HCT116 (cell line): ENCODE measurements at regions of chr15 and their contacts with region 1.

Region 1: GRCh38 chr15:79380755-79381497 is 51.2 kb upstream of the MINAR1 start:
- DNase-seq: peak; percentile 40
- ATAC-seq: peak; percentile 99
- H3K4me3 ChIP-seq: no peak overlapping the region
- H3K27ac ChIP-seq: no peak overlapping the region
- H3K4me1 ChIP-seq: no peaks in the 10 kb centered on the region
- H3K27me3 ChIP-seq: no peaks in the 10 kb centered on the region
- CTCF ChIP-seq: peak; percentile 89 to 92 (median 92)
- POLR2A ChIP-seq: no peak
- RAD21 ChIP-seq: peak; percentile 81

Region 2: DNA sequence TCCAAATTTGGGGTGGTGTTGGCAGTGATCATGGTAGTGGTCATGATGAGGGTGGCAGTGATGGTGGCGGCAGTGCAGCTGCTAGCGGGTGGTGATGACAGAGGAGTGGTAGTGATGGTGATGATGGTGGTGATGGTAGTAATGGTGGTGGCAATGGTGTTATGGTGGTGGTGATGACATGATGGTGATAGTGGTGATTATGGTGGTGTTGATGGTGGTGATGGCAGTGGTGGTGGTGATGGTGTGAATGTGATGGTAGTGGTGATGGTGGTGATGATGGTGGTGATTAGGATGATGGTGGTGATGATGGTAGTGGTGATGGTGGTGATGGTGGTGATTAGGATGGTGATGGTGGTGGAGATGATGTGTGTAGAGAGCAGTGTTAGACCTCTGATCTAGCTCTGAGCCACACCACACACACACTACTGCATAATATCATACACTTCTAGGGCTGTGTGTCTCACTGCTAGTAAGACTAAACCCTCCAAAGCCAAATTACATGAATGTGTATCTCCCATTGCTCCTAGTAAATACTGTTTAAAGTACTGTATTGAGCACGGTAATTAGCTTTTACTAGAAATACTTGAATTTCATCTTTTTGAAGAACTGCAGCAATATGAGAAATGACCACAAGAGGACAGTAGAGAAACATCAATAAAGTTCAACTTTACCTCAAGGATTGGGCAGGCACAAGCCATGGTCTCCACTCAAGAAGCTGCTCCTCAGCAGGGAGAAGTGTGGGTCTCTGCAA is 41.2 kb before region 1 on chr15:
- CTCF ChIA-PET with region 1: interaction called, 17 read pairs
- POLR2A ChIA-PET with region 1: no interaction called
- RAD21 ChIA-PET with region 1: no interaction called
- intact Hi-C with region 1: no loop called
- DNase-seq: peak; percentile 29
- ATAC-seq: peak; percentile 70
- H3K4me3 ChIP-seq: no peak overlapping the region
- H3K27ac ChIP-seq: no peak overlapping the region
- H3K4me1 ChIP-seq: no peaks in the 10 kb centered on the region
- H3K27me3 ChIP-seq: no peaks in the 10 kb centered on the region
- CTCF ChIP-seq: peak; percentile 67 to 96 (median 76); a peak in 5 of 6 replicates
- POLR2A ChIP-seq: no peak
- RAD21 ChIP-seq: peak; percentile 72

Region 3: GRCh38 chr15:79572691-79573404 is 191.9 kb after region 1 on chr15:
- CTCF ChIA-PET with region 1: interaction called, 9 read pairs
- POLR2A ChIA-PET with region 1: no interaction called
- RAD21 ChIA-PET with region 1: no interaction called
- intact Hi-C with region 1: loop called (anchors 5 kb)
- DNase-seq: no peak
- ATAC-seq: no peak
- H3K4me3 ChIP-seq: no peak overlapping the region
- H3K27ac ChIP-seq: no peak overlapping the region
- H3K4me1 ChIP-seq: no peaks in the 10 kb centered on the region
- H3K27me3 ChIP-seq: peaks cover 30% of the 10 kb centered on the region
- CTCF ChIP-seq: no peak
- POLR2A ChIP-seq: no peak
- RAD21 ChIP-seq: no peak

Region 4: GRCh38 chr15:79596051-79596507 is 215.2 kb after region 1 on chr15:
- CTCF ChIA-PET with region 1: interaction called, 111 read pairs
- POLR2A ChIA-PET with region 1: interaction called, 6 read pairs
- RAD21 ChIA-PET with region 1: interaction called, 15 to 22 read pairs
- intact Hi-C with region 1: loop called (anchors 1 kb)
- DNase-seq: peak; percentile 95
- ATAC-seq: peak; percentile 99
- H3K4me3 ChIP-seq: no peak overlapping the region
- H3K27ac ChIP-seq: no peak overlapping the region
- H3K4me1 ChIP-seq: no peaks in the 10 kb centered on the region
- H3K27me3 ChIP-seq: peaks cover 14% of the 10 kb centered on the region
- CTCF ChIP-seq: peak; percentile 99 to 100 (median 99)
- POLR2A ChIP-seq: no peak
- RAD21 ChIP-seq: peak; percentile 89

Region 5: DNA sequence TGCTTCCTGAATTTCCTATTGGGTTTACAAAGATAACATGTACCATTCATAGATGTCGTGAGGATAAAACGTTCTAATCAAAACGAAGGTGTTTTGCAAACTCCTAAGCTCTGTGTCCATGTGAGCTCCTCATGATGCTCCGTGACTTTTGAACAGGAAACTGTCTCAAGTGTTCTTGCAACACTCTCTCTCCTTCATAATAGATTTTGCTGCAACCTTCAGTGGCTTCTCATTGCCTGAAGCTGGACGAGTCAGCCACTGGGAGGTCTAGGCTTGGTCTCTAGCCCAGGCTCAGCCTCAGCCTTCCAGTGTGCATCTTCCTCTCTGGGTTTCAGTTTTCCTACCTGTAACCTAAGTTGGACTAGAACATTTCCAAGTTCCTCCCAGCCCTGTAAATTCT is 608.8 kb after region 1 on chr15:
- CTCF ChIA-PET with region 1: no interaction called
- POLR2A ChIA-PET with region 1: no interaction called
- RAD21 ChIA-PET with region 1: no interaction called
- intact Hi-C with region 1: loop called (anchors 2 kb)
- DNase-seq: no peak
- ATAC-seq: no peak
- H3K4me3 ChIP-seq: no peak overlapping the region
- H3K27ac ChIP-seq: no peak overlapping the region
- H3K4me1 ChIP-seq: peaks cover 3 to 10% of the 10 kb centered on the region in 2 experiments; a peak in 3 of 4 replicates
- H3K27me3 ChIP-seq: peaks cover 4% of the 10 kb centered on the region; the same call in 1 of the 2 replicates
- CTCF ChIP-seq: no peak
- POLR2A ChIP-seq: no peak
- RAD21 ChIP-seq: no peak